K562 (cell line): ENCODE measurements at regions of chr7 and their contacts with region 1.

Region 1: DNA sequence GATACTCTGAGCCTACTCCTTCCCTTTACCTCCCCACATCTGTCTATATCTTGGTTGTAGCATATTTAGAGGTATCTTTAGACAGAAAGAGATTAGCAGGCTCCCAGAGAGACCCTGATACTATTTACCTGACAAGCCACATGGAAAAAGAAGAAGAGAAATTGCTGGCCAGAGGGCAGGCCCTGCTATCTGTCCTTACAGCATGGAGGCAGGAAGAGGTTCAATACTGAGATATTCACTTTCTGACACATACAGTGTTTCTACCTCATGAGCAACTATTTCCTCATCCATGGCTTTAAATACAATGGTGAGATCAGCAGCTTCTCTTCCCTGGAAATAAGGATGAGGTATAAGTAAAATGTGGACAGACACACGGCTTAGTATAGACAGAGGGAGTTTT is 33.9 kb upstream of the TSPAN13 start:
- DNase-seq: peak in 2 of 4 experiments; percentile 50 to 80
- ATAC-seq: peak; percentile 85
- H3K4me3 ChIP-seq: no peak overlapping the region
- H3K27ac ChIP-seq: peak overlapping the region; percentile 59
- H3K4me1 ChIP-seq: peaks cover 0 to 25% of the 10 kb centered on the region in 2 experiments; a peak in 4 of 5 replicates
- H3K27me3 ChIP-seq: no peaks in the 10 kb centered on the region
- CTCF ChIP-seq: peak in 1 of 3 experiments; percentile 10; a peak in 1 of 6 replicates
- EP300 ChIP-seq: peak; percentile 81
- POLR2A ChIP-seq: no peak
- RAD21 ChIP-seq: no peak

Region 2: GRCh38 chr7:16739863-16740622 is 20.3 kb after region 1 on chr7:
- CTCF ChIA-PET with region 1: no interaction called
- POLR2A ChIA-PET with region 1: interaction called, 4 read pairs
- in situ Hi-C with region 1: no loop called
- intact Hi-C with region 1: loop called (anchors 1 kb)
- DNase-seq: peak; percentile 70 to 94 (median 82)
- ATAC-seq: peak; percentile 93
- H3K4me3 ChIP-seq: no peak overlapping the region
- H3K27ac ChIP-seq: peak overlapping the region; percentile 77
- H3K4me1 ChIP-seq: peaks cover 31 to 47% of the 10 kb centered on the region in 2 experiments
- H3K27me3 ChIP-seq: no peaks in the 10 kb centered on the region
- CTCF ChIP-seq: no peak
- EP300 ChIP-seq: peak; percentile 94
- POLR2A ChIP-seq: no peak
- RAD21 ChIP-seq: peak; percentile 25 to 26; a peak in 1 of 4 replicates